PC-9 (cell line): ENCODE measurements at regions of chr6 and their contacts with region 1.

Region 1: DNA sequence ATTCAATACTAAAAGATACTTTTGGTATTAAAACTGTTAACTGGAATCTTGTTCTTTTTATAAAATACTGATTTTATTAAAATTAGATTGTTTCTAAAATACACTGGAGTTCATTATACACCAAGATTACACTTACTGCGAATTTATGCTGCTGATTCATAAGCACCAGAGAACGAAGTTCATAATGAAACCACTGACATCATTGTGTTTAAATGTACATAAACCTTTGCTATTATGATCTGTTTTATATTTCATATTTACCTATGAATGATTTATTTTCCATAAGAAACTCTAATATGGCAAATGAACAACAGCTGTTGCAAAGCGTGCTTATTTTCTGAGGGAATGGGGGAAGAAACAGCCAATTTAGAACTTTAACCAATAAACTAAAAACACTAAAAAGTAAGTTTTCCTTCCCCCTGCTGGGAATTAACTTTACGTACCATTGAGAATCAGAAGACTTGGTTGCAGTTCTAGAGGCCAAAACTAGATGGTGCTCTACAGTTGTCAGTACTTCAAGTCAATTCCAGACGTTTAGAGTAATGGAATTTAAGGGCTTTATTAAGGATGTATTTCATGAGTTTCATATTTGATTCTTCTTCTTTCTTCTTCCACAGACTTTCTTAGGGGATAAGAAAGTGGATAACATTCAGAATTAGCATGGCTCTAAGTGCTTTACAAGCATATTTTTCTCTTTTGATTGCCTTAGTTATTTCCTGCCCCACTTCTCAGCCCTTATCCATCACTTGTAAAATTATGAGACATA is 30.8 kb upstream of the COL19A1 start:
- DNase-seq: peak; percentile 1 to 37
- H3K4me3 ChIP-seq: no peak overlapping the region
- H3K27ac ChIP-seq: no peak overlapping the region
- H3K4me1 ChIP-seq: no peaks in the 10 kb centered on the region
- H3K27me3 ChIP-seq: no peaks in the 10 kb centered on the region
- CTCF ChIP-seq: peak; percentile 76

Region 2: DNA sequence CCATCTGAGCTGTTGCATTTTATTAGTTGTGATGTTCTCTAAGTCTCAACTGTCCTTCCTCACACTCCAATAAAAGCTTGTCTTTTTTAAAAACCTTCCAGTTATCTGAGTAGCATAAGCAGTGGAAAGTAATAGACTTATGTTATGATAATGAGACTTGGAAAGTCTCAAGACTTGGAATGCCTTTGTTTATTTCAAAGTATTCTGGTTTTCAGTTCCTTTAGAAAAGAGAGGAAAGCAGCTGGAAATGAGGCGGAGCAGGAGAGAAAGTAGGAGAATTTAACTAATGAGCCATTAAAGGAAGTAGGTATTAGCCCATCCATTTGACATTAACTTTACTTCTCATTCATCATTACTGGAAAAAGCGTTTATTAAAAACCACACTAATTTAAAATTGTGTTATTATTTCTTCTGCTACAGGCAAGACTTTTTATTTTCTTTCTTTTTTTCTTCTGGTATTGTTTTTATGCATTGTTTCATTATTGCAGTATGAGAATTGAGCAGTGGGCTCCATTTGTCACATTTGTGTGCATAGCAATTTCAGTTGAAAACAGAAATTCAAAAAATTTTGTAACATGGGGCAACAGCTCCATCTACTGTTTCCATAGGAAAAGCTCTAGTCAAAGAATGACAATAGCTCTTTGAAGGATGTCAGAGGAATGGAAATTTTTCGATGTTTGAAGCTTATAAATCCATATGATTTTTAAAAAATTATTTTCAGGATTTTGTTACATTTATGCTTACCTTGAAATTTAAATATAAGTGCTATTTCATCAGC is 272.4 kb after region 1 on chr6:
- CTCF ChIA-PET with region 1: no interaction called
- POLR2A ChIA-PET with region 1: no interaction called
- intact Hi-C with region 1: loop called (anchors 1 kb)
- DNase-seq: no peak
- H3K4me3 ChIP-seq: no peak overlapping the region
- H3K27ac ChIP-seq: no peak overlapping the region
- H3K4me1 ChIP-seq: no peaks in the 10 kb centered on the region
- H3K27me3 ChIP-seq: 0 out of 2 replicates have a peak, but pooled peaks cover 4% of the 10 kb centered on the region
- CTCF ChIP-seq: peak; percentile 76

Region 3: GRCh38 chr6:70166088-70166958 is 330.7 kb after region 1 on chr6:
- CTCF ChIA-PET with region 1: no interaction called
- POLR2A ChIA-PET with region 1: no interaction called
- intact Hi-C with region 1: loop called (anchors 10 kb)
- DNase-seq: peak in 1 of 2 experiments; percentile 27
- H3K4me3 ChIP-seq: no peak overlapping the region
- H3K27ac ChIP-seq: no peak overlapping the region
- H3K4me1 ChIP-seq: no peaks in the 10 kb centered on the region; the same call in 1 of the 2 replicates
- H3K27me3 ChIP-seq: no peaks in the 10 kb centered on the region
- CTCF ChIP-seq: peak; percentile 63